Uterus (tissue), 4 donors: ENCODE measurements at regions of chr17 and their contacts with region 1.

Region 1: GRCh38 chr17:38485146-38485468 is 56.8 kb downstream of the ARHGAP23 start:
- DNase-seq: no peak
- H3K4me3 ChIP-seq: no peak overlapping the region
- H3K27ac ChIP-seq: peak overlapping the region; percentile 58 to 87
- H3K4me1 ChIP-seq: no peaks in the 10 kb centered on the region
- H3K27me3 ChIP-seq: no peaks in the 10 kb centered on the region
- CTCF ChIP-seq: no peak
- POLR2A ChIP-seq: no peak

Region 2: DNA sequence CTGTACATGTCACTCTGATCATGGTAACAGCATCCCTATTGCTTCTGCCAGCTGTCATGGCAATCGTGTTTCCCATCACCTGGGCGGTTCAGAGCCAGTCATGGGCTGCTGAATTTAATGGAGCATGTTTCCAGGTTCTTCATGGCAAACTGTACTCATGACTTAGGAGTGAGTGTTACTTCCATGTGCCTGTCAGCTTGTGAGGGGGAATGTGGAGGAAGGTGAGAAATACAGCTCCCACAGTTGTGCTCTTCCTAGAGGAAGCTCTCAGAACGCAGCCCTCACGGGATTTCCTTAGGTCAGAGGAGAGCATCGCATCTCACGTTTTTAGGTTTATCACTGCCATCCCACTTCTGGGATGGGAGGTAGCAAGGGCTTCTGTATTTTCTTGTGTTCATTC is 84.8 kb before region 1 on chr17:
- intact Hi-C with region 1: no loop called
- DNase-seq: no peak
- H3K4me3 ChIP-seq: no peak overlapping the region
- H3K27ac ChIP-seq: no peak overlapping the region
- H3K4me1 ChIP-seq: no peaks in the 10 kb centered on the region
- H3K27me3 ChIP-seq: no peaks in the 10 kb centered on the region
- CTCF ChIP-seq: no peak
- POLR2A ChIP-seq: no peak

Region 3: DNA sequence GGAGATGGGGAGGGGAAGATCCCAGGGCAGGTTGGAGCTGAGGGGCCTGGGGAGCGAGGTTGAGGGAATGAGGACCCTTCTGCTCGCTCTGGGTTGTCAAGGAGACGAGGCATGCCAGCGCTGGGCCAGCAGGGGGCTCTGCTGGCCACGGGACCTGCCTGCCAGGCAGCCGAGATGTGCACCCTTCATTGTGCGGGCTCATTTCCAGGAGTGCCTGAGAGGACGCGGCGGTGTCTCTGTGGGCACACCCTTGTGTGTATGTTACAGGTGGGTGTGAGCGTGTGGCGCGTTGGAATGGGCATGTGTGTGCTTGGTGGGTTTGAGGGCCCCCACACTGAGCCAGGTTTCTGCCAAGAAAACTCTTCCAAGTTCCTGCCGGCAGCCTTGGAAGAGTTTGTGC is 41.0 kb before region 1 on chr17:
- intact Hi-C with region 1: loop called (anchors 5 kb)
- DNase-seq: peak; percentile 72 to 78
- H3K4me3 ChIP-seq: no peak overlapping the region
- H3K27ac ChIP-seq: peak overlapping the region in 1 of 2 donors; percentile 49
- H3K4me1 ChIP-seq: peaks cover 0 to 5% of the 10 kb centered on the region in 2 donors
- H3K27me3 ChIP-seq: no peaks in the 10 kb centered on the region
- CTCF ChIP-seq: peak; percentile 92 to 99 (median 96)
- POLR2A ChIP-seq: peak in 1 of 2 donors; percentile 31